Activated CD8-positive, alpha-beta T cell treated with anti-CD3 and anti-CD28 coated beads for 36 hours (primary cell): ENCODE measurements at regions of chr1 and their contacts with region 1.

Region 1: DNA sequence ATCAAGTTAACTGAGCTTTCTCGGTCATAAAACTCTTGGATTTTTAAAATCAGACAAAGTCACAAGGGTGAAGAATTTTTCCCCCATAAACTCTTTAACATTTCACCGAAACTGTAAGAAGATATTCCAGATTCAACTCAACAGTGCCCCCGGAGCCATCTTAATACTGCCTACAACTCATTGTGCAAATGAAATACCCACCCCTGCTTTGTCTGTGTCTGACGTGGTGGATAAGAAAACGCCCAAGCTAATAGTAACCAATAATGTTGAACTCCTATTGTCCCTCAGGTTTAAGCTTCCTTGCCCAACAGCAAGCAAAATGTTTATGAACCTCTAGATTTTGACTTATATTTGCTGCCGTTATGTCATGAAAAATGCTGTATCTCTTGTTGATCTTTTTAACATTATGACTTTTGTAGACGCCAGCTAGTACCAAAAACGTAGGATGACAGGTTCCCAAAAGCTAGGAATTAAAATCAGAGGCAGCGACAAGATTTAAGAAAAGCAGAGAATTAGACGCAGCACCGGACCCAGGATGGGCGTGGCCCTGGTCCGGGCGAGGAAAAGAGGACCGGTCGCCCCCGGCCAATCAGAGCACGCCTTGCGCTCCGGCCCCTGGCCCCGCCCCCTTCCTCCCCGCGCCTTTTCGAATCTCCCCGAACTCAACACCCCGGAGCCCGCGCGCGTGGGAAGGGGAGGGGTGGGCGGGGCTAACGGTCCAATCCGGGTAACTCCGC is 1.1 kb downstream of the STMN1 start:
- DNase-seq: peak; percentile 98
- ATAC-seq: peak; percentile 84
- H3K4me3 Mint-ChIP-seq: peak overlapping the region; percentile 93
- H3K27ac Mint-ChIP-seq: peak overlapping the region; percentile 86
- H3K4me1 Mint-ChIP-seq: peaks cover 32% of the 10 kb centered on the region
- H3K27me3 Mint-ChIP-seq: no peaks in the 10 kb centered on the region
- CTCF ChIP-seq: no peak

Region 2: DNA sequence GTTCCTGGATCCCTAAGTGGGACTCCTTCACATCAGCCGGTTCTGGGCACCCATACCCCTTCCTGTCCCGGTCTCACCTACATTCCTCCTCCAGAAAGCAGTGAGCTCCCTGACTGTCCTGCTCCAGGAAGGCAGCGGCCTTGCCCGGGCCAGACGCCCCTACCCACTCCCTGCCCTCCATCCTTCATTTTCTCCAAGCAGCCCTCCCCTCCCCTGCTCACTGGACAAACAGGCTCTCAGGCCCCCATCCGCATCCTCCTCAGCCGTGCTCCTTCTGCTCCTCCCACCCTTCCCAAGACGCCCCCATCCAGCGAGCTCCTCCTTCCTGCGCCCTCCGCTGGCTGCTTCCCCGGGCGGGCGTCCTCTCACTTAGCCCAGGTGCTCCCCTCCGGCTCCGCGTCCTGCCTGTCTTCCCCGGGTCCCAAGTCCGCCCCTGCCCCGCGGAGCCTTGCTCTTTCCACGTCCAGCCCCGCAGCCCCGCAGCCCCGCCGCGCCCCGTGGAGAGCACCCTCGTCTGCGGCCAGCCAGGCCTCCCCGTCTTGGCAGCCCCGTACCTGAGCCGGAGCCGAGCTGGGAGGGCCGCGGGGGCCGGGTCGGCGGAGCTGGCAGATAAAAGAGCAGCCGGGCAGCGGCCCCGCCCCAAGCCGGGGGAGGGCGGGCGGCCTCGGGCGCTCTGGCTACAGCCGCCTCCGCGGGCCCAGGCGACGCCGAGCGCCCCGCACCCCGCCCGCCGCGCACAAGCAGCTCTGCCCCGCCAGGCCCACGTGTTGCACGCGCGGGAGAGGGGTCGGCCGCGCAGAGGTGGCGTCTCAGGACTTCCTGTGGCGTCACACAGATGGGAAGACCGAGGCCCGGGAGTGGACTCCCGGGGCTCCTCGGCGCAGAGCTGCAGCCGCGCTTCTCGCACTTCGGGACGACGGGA is 29.9 kb before region 1 on chr1 and contains the start of gene PAQR7:
- CTCF ChIA-PET with region 1: interaction called, 3 read pairs
- POLR2A ChIA-PET with region 1: interaction called, 13 read pairs
- intact Hi-C with region 1: no loop called
- DNase-seq: peak; percentile 77
- ATAC-seq: peak; percentile 88
- H3K4me3 Mint-ChIP-seq: peak within 1 kb of the TSS; percentile 88
- H3K27ac Mint-ChIP-seq: peak within 1 kb of the TSS; percentile 81
- H3K4me1 Mint-ChIP-seq: peaks cover 5% of the 10 kb centered on the region
- H3K27me3 Mint-ChIP-seq: peaks cover 4% of the 10 kb centered on the region
- CTCF ChIP-seq: no peak
- total RNA-seq, gene PAQR7: 6.8 to 8.0 TPM

Region 3: GRCh38 chr1:25922056-25922969 is 17.2 kb after region 1 on chr1:
- CTCF ChIA-PET with region 1: interaction called, 4 read pairs
- POLR2A ChIA-PET with region 1: interaction called, 32 read pairs
- intact Hi-C with region 1: no loop called
- DNase-seq: peak; percentile 66
- ATAC-seq: peak; percentile 83
- H3K4me3 Mint-ChIP-seq: peak overlapping the region; percentile 68
- H3K27ac Mint-ChIP-seq: peak overlapping the region; percentile 67
- H3K4me1 Mint-ChIP-seq: peaks cover 29% of the 10 kb centered on the region
- H3K27me3 Mint-ChIP-seq: peaks cover 6% of the 10 kb centered on the region
- CTCF ChIP-seq: no peak

Region 4: DNA sequence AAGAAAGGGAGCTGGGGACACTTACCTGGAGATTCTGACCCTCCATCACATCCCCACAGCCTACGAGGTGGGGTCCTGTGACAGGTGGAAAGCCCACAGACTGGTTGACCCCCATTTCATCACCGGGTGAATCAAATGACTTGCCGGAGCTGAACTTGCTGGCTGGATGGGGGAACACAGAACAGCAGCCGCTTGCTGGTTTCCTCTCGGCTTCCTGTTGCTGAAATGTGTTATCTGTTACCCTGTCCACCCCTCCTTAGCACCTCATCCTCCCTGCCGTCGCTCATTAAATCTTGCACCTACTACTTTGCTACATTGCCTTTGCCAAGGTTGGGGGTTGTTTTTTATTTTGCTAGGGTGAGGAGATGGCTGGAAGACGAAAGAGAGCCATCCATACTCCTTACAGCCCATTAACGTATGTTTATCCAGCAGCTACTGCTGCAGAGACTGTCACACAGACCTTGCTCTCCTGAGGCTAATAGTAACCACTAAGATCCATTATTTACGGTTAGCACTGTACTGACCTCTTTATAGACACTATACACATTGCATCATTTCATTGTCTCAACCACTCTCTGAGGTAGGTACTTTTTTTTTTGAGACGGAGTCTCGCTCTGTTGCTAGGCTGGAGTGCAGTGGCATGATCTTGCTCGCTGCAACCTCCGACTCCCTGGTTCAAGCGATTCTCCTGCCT is 85.7 kb after region 1 on chr1:
- CTCF ChIA-PET with region 1: interaction called, 417 read pairs
- POLR2A ChIA-PET with region 1: interaction called, 160 read pairs
- intact Hi-C with region 1: no loop called
- DNase-seq: peak; percentile 62
- ATAC-seq: peak; percentile 88
- H3K4me3 Mint-ChIP-seq: peak overlapping the region; percentile 84
- H3K27ac Mint-ChIP-seq: peak overlapping the region; percentile 96
- H3K4me1 Mint-ChIP-seq: peaks cover 51% of the 10 kb centered on the region
- H3K27me3 Mint-ChIP-seq: no peaks in the 10 kb centered on the region
- CTCF ChIP-seq: no peak

Region 5: DNA sequence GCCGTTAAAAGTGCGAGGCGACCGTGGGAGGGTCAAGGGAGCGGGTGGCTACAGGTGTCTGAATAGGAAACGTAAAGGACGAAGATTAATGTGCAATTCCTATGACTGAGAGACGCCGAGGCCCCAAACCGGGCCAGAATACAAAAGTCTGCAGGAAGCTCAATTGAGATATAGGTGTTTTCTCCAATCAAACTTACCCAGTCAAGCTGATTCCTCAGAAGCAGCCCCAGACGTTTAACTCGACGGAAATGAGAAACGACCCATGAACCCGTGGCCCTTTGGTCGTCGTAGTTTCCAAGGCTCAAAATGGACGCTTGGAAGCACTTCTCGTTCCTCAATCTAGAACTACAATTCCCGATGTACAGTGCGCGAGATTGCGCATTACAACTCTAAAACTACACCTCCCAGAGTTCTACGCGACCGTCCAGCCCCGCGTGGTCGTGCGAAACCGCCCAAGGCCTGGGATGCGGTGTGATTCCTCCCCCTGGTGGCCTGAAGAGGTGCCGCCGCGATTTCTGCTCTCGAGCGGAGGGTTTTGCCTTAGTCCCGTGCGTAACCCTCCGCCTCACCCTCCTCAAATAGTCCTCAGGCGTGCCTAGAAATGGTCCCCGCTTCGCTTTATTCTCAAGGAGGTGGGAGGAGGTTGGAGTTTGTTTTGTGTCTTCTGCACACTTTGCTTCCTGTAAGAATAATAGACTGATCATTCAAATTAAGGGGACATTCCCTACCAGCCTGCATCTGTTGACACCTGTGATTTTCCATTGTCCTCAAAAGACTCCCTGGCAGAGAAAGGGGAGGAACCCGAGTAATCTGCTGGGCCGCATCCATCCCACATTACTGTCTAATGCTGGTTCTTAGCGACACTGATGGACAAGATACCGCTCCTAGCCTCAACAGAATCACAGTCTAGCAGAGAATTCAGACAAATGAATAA is 93.0 kb after region 1 on chr1 and contains the start of gene PAFAH2:
- CTCF ChIA-PET with region 1: interaction called, 417 read pairs
- POLR2A ChIA-PET with region 1: interaction called, 160 read pairs
- intact Hi-C with region 1: loop called (anchors 2 kb)
- DNase-seq: peak; percentile 98
- ATAC-seq: peak; percentile 97
- H3K4me3 Mint-ChIP-seq: peak within 1 kb of the TSS; percentile 94
- H3K27ac Mint-ChIP-seq: peak within 1 kb of the TSS; percentile 98
- H3K4me1 Mint-ChIP-seq: peaks cover 18% of the 10 kb centered on the region
- H3K27me3 Mint-ChIP-seq: no peaks in the 10 kb centered on the region
- CTCF ChIP-seq: peak; percentile 91
- total RNA-seq, gene PAFAH2: 7.4 to 8.0 TPM